Naive thymus-derived CD4-positive, alpha-beta T cell (primary cell): ENCODE measurements at regions of chr3 and their contacts with region 1.

Region 1: GRCh38 chr3:184362668-184363540 is 1.4 kb downstream of the POLR2H start:
- DNase-seq: peak; percentile 74 to 94 (median 90)
- ATAC-seq: peak; percentile 87
- H3K4me3 ChIP-seq: peak overlapping the region; percentile 97
- H3K4me3 Mint-ChIP-seq: peak overlapping the region; percentile 95 to 100 (median 99)
- H3K27ac ChIP-seq: peak overlapping the region; percentile 84
- H3K27ac Mint-ChIP-seq: peak overlapping the region; percentile 91 to 98 (median 97)
- H3K4me1 ChIP-seq: peaks cover 11 to 13% of the 10 kb centered on the region in 2 donors
- H3K4me1 Mint-ChIP-seq: peaks cover 25 to 37% (median 30%) of the 10 kb centered on the region in 7 donors
- H3K27me3 ChIP-seq: no peaks in the 10 kb centered on the region
- H3K27me3 Mint-ChIP-seq: peaks cover 0 to 13% (median 0%) of the 10 kb centered on the region in 5 donors

Region 2: GRCh38 chr3:184017672-184018423 is 345.1 kb before region 1 on chr3 and contains the start of gene ABCC5:
- CTCF ChIA-PET with region 1: no interaction called
- POLR2A ChIA-PET with region 1: no interaction called
- intact Hi-C with region 1: loop called in 1 of 2 experiments (anchors 1 kb)
- DNase-seq: peak; percentile 62 to 84 (median 79)
- ATAC-seq: peak; percentile 96
- H3K4me3 ChIP-seq: peak within 1 kb of the TSS; percentile 100
- H3K4me3 Mint-ChIP-seq: peak within 1 kb of the TSS; percentile 96 to 100 (median 99)
- H3K27ac ChIP-seq: peak within 1 kb of the TSS; percentile 72
- H3K27ac Mint-ChIP-seq: peak within 1 kb of the TSS; percentile 70 to 95 (median 91)
- H3K4me1 ChIP-seq: peaks cover 8 to 14% of the 10 kb centered on the region in 2 donors
- H3K4me1 Mint-ChIP-seq: peaks cover 11 to 33% (median 25%) of the 10 kb centered on the region in 7 donors
- H3K27me3 ChIP-seq: no peaks in the 10 kb centered on the region
- H3K27me3 Mint-ChIP-seq: peaks cover 5 to 15% (median 9%) of the 10 kb centered on the region in 5 donors
- total RNA-seq, gene ABCC5: 15.6 to 50.4 (median 25.5) TPM

Region 3: DNA sequence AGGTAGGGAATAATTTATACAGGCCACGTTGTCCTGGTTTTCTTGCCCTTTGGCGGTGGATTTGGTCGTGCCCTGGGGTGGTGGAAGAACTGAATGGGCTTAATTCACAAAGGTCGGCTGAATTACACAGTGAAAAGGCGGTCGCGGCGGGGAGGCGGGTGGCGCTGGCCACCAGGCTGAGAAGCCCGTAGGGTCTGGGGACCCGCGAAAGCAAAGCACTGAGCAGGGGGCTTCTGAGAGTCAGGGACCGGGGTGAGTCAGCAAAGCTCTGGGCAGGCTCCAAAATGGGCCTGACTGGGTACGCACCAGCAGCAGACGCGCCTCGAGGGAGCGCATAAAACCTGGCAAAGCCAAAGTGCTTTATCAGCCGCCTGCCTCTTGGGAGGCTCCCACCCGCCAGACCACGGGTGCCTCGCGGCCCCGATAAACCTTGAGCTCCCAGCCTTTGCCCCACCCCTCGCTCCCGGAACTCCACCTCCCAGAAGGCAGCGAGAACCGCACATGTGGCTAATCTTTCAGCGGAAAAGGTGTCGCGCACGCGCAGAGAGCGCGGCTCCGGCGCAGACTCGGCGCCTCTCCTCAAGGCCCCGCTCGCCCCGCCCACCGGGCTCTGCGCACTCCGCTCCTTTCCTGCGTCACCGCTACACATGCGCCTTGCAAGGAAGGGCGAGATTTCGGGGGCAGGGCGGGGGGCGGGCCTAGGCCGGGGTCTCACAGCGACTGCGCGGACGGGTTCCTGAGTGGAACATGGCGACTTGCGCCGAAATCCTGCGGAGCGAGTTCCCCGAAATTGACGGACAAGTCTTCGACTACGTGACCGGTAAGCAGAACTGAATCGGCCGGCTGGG is 177.2 kb before region 1 on chr3 and contains the start of gene ABCF3:
- CTCF ChIA-PET with region 1: no interaction called
- POLR2A ChIA-PET with region 1: interaction called, 3 read pairs
- intact Hi-C with region 1: loop called (anchors 1 to 2 kb)
- DNase-seq: peak; percentile 98 to 100 (median 99)
- ATAC-seq: peak; percentile 96
- H3K4me3 ChIP-seq: peak within 1 kb of the TSS; percentile 81
- H3K4me3 Mint-ChIP-seq: peak within 1 kb of the TSS; percentile 91 to 100 (median 98)
- H3K27ac ChIP-seq: peak within 1 kb of the TSS; percentile 89
- H3K27ac Mint-ChIP-seq: peak within 1 kb of the TSS; percentile 89 to 98 (median 97)
- H3K4me1 ChIP-seq: peaks cover 18 to 24% of the 10 kb centered on the region in 2 donors
- H3K4me1 Mint-ChIP-seq: peaks cover 31 to 52% (median 43%) of the 10 kb centered on the region in 7 donors
- H3K27me3 ChIP-seq: no peaks in the 10 kb centered on the region
- H3K27me3 Mint-ChIP-seq: no peaks in the 10 kb centered on the region
- total RNA-seq, gene ABCF3: 79.3 to 153 (median 117) TPM

Region 4: GRCh38 chr3:184335661-184336546 is 27.0 kb before region 1 on chr3:
- CTCF ChIA-PET with region 1: no interaction called
- POLR2A ChIA-PET with region 1: interaction called, 3 read pairs
- intact Hi-C with region 1: loop called (anchors 1 kb)
- DNase-seq: peak; percentile 78 to 96 (median 87)
- ATAC-seq: peak; percentile 86
- H3K4me3 ChIP-seq: peak overlapping the region; percentile 66
- H3K4me3 Mint-ChIP-seq: peak overlapping the region; percentile 88 to 96 (median 92)
- H3K27ac ChIP-seq: peak overlapping the region; percentile 96
- H3K27ac Mint-ChIP-seq: peak overlapping the region; percentile 76 to 99 (median 96)
- H3K4me1 ChIP-seq: peaks cover 8 to 10% of the 10 kb centered on the region in 2 donors
- H3K4me1 Mint-ChIP-seq: peaks cover 18 to 54% (median 22%) of the 10 kb centered on the region in 7 donors
- H3K27me3 ChIP-seq: no peaks in the 10 kb centered on the region
- H3K27me3 Mint-ChIP-seq: no peaks in the 10 kb centered on the region

Region 5: DNA sequence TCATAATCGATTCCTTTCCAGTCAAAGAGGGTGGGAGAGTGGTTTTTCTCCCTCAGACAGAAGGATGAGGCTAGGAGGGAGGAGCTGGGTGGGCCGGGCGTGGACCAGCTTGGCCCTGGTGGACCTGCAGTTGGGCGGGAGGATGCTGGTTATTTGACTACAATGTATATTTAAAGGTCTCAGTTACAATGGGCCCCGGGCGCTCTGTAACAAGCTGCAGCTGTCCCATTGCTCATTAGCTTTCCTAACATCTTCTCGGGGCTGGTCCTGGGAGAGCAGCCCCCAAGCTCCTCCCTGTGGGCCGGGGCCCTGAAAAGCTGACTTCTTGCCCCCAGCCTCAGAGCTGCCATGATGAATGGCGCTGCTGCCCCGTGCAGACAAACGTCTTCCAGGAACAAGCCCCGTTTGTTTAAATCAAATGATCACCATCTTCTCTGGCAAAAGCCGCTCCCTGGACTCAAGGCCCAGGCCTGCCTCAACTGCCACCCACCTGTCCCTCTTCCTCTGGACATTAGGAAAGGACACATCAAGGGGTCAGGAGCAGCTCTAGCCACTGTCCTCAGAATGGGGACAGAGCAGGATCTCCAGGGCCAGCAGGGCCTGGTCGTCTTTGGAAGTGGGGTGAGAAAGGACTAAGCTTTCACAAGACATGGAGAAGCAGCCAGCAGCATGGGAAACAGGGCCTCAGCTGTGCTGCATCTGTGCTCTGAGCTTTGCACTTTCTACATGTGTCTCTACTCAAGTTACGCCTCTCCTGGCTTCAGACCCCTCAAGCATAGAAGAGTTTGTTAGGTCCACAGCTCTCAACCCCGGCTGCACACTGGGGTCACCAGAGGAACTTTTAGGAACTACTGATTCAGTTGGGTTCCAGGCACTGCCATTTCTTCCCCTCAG is 310.3 kb after region 1 on chr3:
- CTCF ChIA-PET with region 1: no interaction called
- POLR2A ChIA-PET with region 1: no interaction called
- intact Hi-C with region 1: no loop called
- DNase-seq: no peak
- ATAC-seq: no peak
- H3K4me3 ChIP-seq: no peak overlapping the region
- H3K4me3 Mint-ChIP-seq: no peak overlapping the region
- H3K27ac ChIP-seq: no peak overlapping the region
- H3K27ac Mint-ChIP-seq: no peak overlapping the region
- H3K4me1 ChIP-seq: no peaks in the 10 kb centered on the region
- H3K4me1 Mint-ChIP-seq: peaks cover 0 to 6% (median 0%) of the 10 kb centered on the region in 7 donors
- H3K27me3 ChIP-seq: no peaks in the 10 kb centered on the region
- H3K27me3 Mint-ChIP-seq: peaks cover 0 to 22% (median 0%) of the 10 kb centered on the region in 5 donors

Region 6: GRCh38 chr3:185282696-185283394 is 919.9 kb after region 1 on chr3:
- CTCF ChIA-PET with region 1: no interaction called
- POLR2A ChIA-PET with region 1: no interaction called
- intact Hi-C with region 1: loop called in 1 of 2 experiments (anchors 2 kb)
- DNase-seq: peak; percentile 80 to 95 (median 89)
- ATAC-seq: peak; percentile 99
- H3K4me3 ChIP-seq: peak overlapping the region; percentile 91
- H3K4me3 Mint-ChIP-seq: peak overlapping the region; percentile 89 to 100 (median 94)
- H3K27ac ChIP-seq: peak overlapping the region; percentile 59
- H3K27ac Mint-ChIP-seq: peak overlapping the region; percentile 77 to 98 (median 93)
- H3K4me1 ChIP-seq: peaks cover 5 to 12% of the 10 kb centered on the region in 2 donors
- H3K4me1 Mint-ChIP-seq: peaks cover 15 to 33% (median 19%) of the 10 kb centered on the region in 7 donors
- H3K27me3 ChIP-seq: no peaks in the 10 kb centered on the region
- H3K27me3 Mint-ChIP-seq: peaks cover 9 to 25% (median 21%) of the 10 kb centered on the region in 5 donors